Psoas muscle (tissue), 8 donors: ENCODE measurements at regions of chr3 and their contacts with region 1.

Region 1: DNA sequence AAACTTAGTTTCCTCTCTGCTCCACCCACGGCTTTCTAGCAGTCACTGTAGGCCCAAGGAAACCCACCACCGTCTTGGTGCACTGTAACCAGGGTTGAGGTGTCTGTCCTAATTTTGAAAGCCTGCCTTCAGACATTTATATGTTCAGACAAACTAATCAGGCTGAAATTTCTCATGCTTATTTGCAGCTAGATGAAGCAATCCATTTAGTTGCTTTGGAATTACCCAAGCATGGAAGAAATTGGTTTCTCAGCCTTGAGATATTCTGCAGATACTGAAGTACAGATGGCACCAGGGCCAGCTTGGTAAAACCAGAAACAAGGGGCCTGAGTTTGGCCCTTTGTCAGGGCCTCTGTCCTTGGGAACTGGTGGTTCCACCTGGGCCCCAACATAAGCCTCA is 105.4 kb downstream of the CACNA1D start:
- DNase-seq: no peak
- ATAC-seq: no peak
- H3K4me3 ChIP-seq: no peak overlapping the region
- H3K27ac ChIP-seq: no peak overlapping the region
- H3K4me1 ChIP-seq: no peaks in the 10 kb centered on the region
- H3K27me3 ChIP-seq: peaks cover 0 to 5% (median 5%) of the 10 kb centered on the region in 3 donors
- CTCF ChIP-seq: no peak

Region 2: GRCh38 chr3:53493963-53494791 is 105.6 kb before region 1 on chr3 and contains the start of gene CACNA1D:
- intact Hi-C with region 1: no loop called
- DNase-seq: peak in 1 of 2 donors; percentile 19
- ATAC-seq: peak in 3 of 4 donors; percentile 31 to 34 (median 32)
- H3K4me3 ChIP-seq: peak within 1 kb of the TSS; percentile 58
- H3K27ac ChIP-seq: no peak within 1 kb of the TSS
- H3K4me1 ChIP-seq: peaks cover 12% of the 10 kb centered on the region
- H3K27me3 ChIP-seq: peaks cover 7 to 64% (median 17%) of the 10 kb centered on the region in 3 donors
- CTCF ChIP-seq: no peak
- total RNA-seq, gene CACNA1D: 0.28 to 0.82 (median 0.34) TPM in 3 of 4 donors, not detected in the other

Region 3: GRCh38 chr3:53628536-53629401 is 29.0 kb after region 1 on chr3:
- intact Hi-C with region 1: loop called in 1 of 2 experiments (anchors 1 kb)
- DNase-seq: no peak
- ATAC-seq: no peak
- H3K4me3 ChIP-seq: no peak overlapping the region
- H3K27ac ChIP-seq: no peak overlapping the region
- H3K4me1 ChIP-seq: no peaks in the 10 kb centered on the region
- H3K27me3 ChIP-seq: peaks cover 2 to 5% (median 3%) of the 10 kb centered on the region in 3 donors
- CTCF ChIP-seq: no peak